ENCODE measurements at regions of chrX and their contacts with region 1.

Region 1: DNA sequence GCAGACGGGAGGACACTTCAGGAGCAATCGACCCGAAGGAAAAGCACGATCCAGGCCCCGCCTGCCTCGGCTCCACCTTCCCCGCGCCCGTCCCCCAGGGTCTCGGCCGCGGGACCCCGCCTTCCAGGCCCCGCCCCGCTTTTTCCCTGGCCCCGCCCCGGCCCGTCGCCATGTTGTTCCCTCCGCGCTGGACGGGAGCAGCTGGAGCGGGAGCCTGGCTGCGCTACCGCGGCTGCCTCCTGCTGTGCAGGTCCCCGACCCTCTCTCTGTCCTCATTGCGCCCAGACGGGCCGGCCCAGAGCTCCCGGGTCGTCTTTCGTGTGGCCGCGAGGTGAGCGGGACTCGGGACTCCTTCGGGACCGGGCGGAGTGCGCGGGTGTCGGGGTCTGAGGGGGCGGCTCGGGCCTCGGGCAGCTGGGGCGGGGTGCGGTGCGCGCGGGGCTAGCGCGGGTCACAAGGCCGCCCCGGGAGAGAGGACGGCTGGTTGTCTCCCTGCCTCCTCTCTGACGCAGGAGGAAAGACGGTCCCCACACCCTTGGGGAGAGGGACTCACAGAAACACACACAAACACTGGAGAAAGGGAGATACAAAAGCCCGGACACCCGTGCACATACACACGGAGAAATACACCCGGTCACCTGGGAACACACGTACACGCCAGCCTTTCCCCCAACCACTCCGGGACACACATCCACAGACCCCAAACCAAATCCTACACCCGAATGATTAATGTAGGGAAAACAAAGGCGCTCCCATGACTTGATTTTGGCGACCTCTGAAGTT is at the start of gene RAB9A:
- DNase-seq: peak; percentile 54 to 88
- H3K4me3 ChIP-seq: peak within 1 kb of the TSS; percentile 63
- H3K27ac ChIP-seq: peak within 1 kb of the TSS; percentile 82
- H3K4me1 ChIP-seq: peaks cover 54% of the 10 kb centered on the region
- H3K27me3 ChIP-seq: no peaks in the 10 kb centered on the region
- CTCF ChIP-seq: no peak
- total RNA-seq, gene RAB9A: 26.7 and 30.7 TPM in 2 replicates

Region 2: DNA sequence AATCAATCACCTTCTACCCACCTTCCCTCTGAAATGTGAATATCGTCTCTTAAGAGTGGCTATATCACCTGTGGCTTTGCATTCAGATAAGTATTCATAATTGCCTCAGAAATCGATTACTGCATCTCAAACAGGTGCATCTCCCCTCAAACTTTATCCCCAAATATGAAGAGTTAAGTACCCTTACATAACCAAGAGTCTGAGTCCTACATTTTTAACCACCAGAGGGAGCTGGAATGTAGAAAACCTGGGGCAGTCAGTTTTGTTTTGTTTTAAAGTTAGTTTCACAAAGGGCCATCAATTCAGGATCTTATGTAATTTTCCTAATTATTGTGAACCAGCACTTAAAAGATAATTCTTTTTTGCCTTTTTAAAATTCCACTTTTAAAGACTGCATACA is 30.5 kb before region 1 on chrX:
- CTCF ChIA-PET with region 1: no interaction called
- POLR2A ChIA-PET with region 1: no interaction called
- intact Hi-C with region 1: loop called (anchors 1 kb)
- DNase-seq: peak in 1 of 2 experiments; percentile 52
- H3K4me3 ChIP-seq: peak overlapping the region; percentile 42; the same call in 1 of the 2 replicates
- H3K27ac ChIP-seq: peak overlapping the region; percentile 91
- H3K4me1 ChIP-seq: peaks cover 24% of the 10 kb centered on the region
- H3K27me3 ChIP-seq: no peaks in the 10 kb centered on the region
- CTCF ChIP-seq: peak; percentile 84

Region 3: DNA sequence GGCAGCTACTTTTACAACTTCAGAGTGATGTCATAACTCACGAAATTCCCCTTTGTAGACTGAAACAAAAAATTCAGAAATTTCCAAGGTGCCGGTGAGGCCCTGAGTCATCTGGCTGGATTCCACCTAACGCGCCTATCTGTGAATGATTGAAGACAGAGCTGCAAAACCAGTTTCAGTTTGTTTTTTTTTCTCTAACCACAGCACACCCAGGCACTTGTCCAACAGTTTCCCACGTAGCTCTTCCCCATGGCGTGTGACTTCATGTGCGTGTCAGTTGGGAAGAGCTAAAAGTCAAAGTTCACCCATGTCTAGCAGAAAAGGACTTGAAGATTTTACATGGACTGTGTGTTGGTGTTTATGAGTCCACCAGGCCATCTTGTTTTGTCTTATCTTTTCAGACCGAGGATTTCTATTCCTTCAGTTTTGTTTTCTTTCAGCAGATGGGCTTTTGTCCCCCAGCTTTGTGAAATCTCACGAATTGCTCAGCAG is 19.9 kb before region 1 on chrX:
- CTCF ChIA-PET with region 1: no interaction called
- POLR2A ChIA-PET with region 1: interaction called, 15 read pairs
- intact Hi-C with region 1: loop called (anchors 1 kb)
- DNase-seq: peak; percentile 74 to 95
- H3K4me3 ChIP-seq: peak overlapping the region; percentile 35; the same call in 1 of the 2 replicates
- H3K27ac ChIP-seq: peak overlapping the region; percentile 94
- H3K4me1 ChIP-seq: peaks cover 35% of the 10 kb centered on the region
- H3K27me3 ChIP-seq: no peaks in the 10 kb centered on the region
- CTCF ChIP-seq: no peak

Region 4: DNA sequence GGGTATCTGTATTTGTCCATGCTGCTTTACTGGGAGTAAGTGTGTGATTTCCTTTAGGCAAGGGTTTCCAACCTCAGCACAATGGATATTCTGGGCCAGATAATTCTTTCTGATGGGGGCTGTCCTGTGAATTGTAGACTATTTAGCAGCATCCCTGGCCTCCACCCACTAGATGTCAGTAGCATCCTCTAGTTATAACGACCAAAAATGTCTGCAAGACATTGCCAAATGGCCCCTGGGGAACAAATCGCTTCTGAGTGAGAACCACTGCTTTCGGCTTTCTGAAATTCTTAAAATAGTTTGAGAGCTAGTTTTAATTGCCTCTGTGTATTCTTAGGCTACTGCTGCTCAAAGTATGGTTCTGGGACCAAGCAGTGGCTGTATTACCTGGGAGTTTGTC is 208.9 kb after region 1 on chrX:
- CTCF ChIA-PET with region 1: no interaction called
- POLR2A ChIA-PET with region 1: no interaction called
- intact Hi-C with region 1: no loop called
- DNase-seq: no peak
- H3K4me3 ChIP-seq: no peak overlapping the region
- H3K27ac ChIP-seq: no peak overlapping the region
- H3K4me1 ChIP-seq: no peaks in the 10 kb centered on the region
- H3K27me3 ChIP-seq: no peaks in the 10 kb centered on the region
- CTCF ChIP-seq: 0 out of 2 replicates have a peak, but pooled peaks have one; percentile 14

Region 5: GRCh38 chrX:13923845-13924244 is 234.7 kb after region 1 on chrX:
- CTCF ChIA-PET with region 1: no interaction called
- POLR2A ChIA-PET with region 1: no interaction called
- intact Hi-C with region 1: no loop called
- DNase-seq: no peak
- H3K4me3 ChIP-seq: no peak overlapping the region
- H3K27ac ChIP-seq: no peak overlapping the region
- H3K4me1 ChIP-seq: no peaks in the 10 kb centered on the region
- H3K27me3 ChIP-seq: no peaks in the 10 kb centered on the region
- CTCF ChIP-seq: no peak

Measured in PC-9 (cell line).